Stomach (tissue), 19 donors: ENCODE measurements at regions of chr9 and their contacts with region 1.

Region 1: GRCh38 chr9:72586388-72587130 is 65.2 kb downstream of the TMC1 start:
- DNase-seq: no peak
- H3K4me3 ChIP-seq: no peak overlapping the region
- H3K27ac ChIP-seq: peak overlapping the region in 3 of 5 donors; percentile 37 to 69 (median 48)
- H3K4me1 ChIP-seq: peaks cover 4 to 52% (median 8%) of the 10 kb centered on the region in 4 donors
- H3K27me3 ChIP-seq: no peaks in the 10 kb centered on the region
- CTCF ChIP-seq: no peak
- EP300 ChIP-seq: no peak
- POLR2A ChIP-seq: no peak

Region 2: GRCh38 chr9:72356041-72356582 is 230.4 kb before region 1 on chr9:
- intact Hi-C with region 1: loop called (anchors 10 kb)
- DNase-seq: peak in 1 of 2 donors; percentile 62
- H3K4me3 ChIP-seq: peak overlapping the region in 1 of 4 donors; percentile 79
- H3K27ac ChIP-seq: peak overlapping the region in 4 of 5 donors; percentile 34 to 100 (median 71)
- H3K4me1 ChIP-seq: peaks cover 69 to 96% (median 86%) of the 10 kb centered on the region in 4 donors
- H3K27me3 ChIP-seq: no peaks in the 10 kb centered on the region
- CTCF ChIP-seq: no peak
- EP300 ChIP-seq: no peak
- POLR2A ChIP-seq: no peak

Region 3: GRCh38 chr9:72656021-72656420 is 69.5 kb after region 1 on chr9:
- intact Hi-C with region 1: no loop called
- DNase-seq: no peak
- H3K4me3 ChIP-seq: no peak overlapping the region
- H3K27ac ChIP-seq: no peak overlapping the region
- H3K4me1 ChIP-seq: no peaks in the 10 kb centered on the region
- H3K27me3 ChIP-seq: no peaks in the 10 kb centered on the region
- CTCF ChIP-seq: no peak
- EP300 ChIP-seq: no peak
- POLR2A ChIP-seq: no peak